Activated CD4-positive, alpha-beta memory T cell treated with anti-CD3 and anti-CD28 coated beads for 36 hours (primary cell): ENCODE measurements at regions of chr1 and their contacts with region 1.

Region 1: GRCh38 chr1:65209005-65209885 is 61.2 kb downstream of the AK4 start:
- DNase-seq: no peak
- H3K4me3 Mint-ChIP-seq: no peak overlapping the region
- H3K27ac Mint-ChIP-seq: no peak overlapping the region
- H3K4me1 Mint-ChIP-seq: peaks cover 14% of the 10 kb centered on the region
- H3K27me3 Mint-ChIP-seq: peaks cover 3% of the 10 kb centered on the region

Region 2: DNA sequence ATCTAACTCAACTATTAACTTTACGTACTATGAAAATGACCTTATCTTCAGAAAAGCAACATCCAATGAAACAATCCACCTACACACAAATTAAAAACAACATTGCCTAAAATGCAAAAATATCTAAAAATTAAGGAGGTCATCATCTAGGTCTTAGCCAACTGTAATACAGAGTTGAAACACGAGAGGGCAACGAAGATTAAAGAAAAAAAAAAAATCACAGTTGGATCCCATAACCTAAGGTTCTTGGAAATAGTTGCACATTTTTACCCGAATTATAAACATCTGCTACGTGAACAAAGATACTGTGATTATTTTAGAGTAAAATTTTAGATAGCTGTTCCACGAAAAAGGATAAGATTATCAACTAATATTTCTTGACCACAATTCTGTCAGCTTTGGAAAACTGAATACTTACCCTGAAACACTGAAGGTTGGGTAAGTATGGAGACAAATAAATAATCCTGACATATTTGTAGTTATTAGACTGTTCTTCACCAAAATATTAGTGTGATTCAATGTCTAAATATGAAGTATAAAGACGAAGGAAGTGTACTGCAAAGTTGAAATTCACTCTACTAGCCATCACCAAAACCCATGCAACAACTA is 149.2 kb before region 1 on chr1:
- CTCF ChIA-PET with region 1: interaction called, 8 read pairs
- POLR2A ChIA-PET with region 1: no interaction called
- intact Hi-C with region 1: loop called (anchors 1 kb)
- DNase-seq: no peak
- H3K4me3 Mint-ChIP-seq: no peak overlapping the region
- H3K27ac Mint-ChIP-seq: no peak overlapping the region
- H3K4me1 Mint-ChIP-seq: peaks cover 45% of the 10 kb centered on the region
- H3K27me3 Mint-ChIP-seq: no peaks in the 10 kb centered on the region

Region 3: GRCh38 chr1:65075123-65075976 is 133.9 kb before region 1 on chr1:
- CTCF ChIA-PET with region 1: interaction called, 18 read pairs
- POLR2A ChIA-PET with region 1: no interaction called
- intact Hi-C with region 1: no loop called
- DNase-seq: peak; percentile 73
- H3K4me3 Mint-ChIP-seq: no peak overlapping the region
- H3K27ac Mint-ChIP-seq: no peak overlapping the region
- H3K4me1 Mint-ChIP-seq: peaks cover 14% of the 10 kb centered on the region
- H3K27me3 Mint-ChIP-seq: no peaks in the 10 kb centered on the region

Region 4: DNA sequence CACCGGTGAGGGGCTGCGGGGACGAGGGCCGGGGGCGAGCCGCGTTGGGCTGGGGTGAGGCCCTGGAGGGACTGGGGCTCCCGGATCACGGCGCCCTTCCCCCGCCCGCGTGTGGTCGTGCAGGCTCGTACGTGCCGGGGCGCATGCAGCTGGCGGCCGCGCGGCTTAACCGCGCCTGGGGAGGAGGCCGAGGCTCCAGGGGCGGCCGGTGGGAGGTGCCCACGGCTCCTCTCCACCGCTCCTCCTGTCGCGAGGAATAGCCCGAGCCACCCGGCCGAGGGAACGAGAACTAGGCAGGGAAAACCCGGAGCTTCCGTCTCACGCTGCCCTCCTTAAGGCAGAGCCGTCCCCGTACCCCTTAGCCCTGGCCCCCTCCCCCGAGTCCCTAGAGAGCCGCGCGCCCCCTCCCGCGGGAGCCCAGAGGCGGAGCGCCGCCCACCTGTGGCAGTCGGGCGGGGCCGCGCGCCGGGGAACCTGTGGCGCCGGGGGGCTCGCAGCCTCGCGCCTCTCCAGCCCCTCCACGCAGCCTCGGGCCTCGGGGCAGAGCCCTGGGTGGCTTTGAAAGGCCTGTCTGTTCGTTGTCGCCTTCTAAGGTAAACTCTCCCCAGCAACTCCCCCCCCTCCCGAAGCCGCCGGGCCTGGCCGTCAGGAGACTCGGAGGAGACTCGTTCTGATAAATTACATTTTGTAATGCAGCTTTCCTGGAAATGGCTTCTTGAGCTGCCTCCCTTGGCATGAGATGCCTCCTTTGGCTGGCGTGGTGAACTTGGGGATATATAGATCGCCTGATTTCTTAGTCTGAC is 60.5 kb before region 1 on chr1:
- CTCF ChIA-PET with region 1: no interaction called
- POLR2A ChIA-PET with region 1: no interaction called
- intact Hi-C with region 1: loop called (anchors 2 kb)
- DNase-seq: peak; percentile 65
- H3K4me3 Mint-ChIP-seq: peak overlapping the region; percentile 76
- H3K27ac Mint-ChIP-seq: no peak overlapping the region
- H3K4me1 Mint-ChIP-seq: peaks cover 14% of the 10 kb centered on the region
- H3K27me3 Mint-ChIP-seq: peaks cover 31% of the 10 kb centered on the region

Region 5: GRCh38 chr1:65221638-65222339 is 12.5 kb after region 1 on chr1:
- CTCF ChIA-PET with region 1: interaction called, 15 read pairs
- POLR2A ChIA-PET with region 1: no interaction called
- intact Hi-C with region 1: no loop called
- DNase-seq: no peak
- H3K4me3 Mint-ChIP-seq: no peak overlapping the region
- H3K27ac Mint-ChIP-seq: no peak overlapping the region
- H3K4me1 Mint-ChIP-seq: no peaks in the 10 kb centered on the region
- H3K27me3 Mint-ChIP-seq: peaks cover 16% of the 10 kb centered on the region

Region 6: GRCh38 chr1:65230731-65231481 is 21.7 kb after region 1 on chr1:
- CTCF ChIA-PET with region 1: interaction called, 6 read pairs
- POLR2A ChIA-PET with region 1: no interaction called
- intact Hi-C with region 1: loop called (anchors 1 kb)
- DNase-seq: peak; percentile 24
- H3K4me3 Mint-ChIP-seq: no peak overlapping the region
- H3K27ac Mint-ChIP-seq: peak overlapping the region; percentile 16
- H3K4me1 Mint-ChIP-seq: peaks cover 17% of the 10 kb centered on the region
- H3K27me3 Mint-ChIP-seq: peaks cover 7% of the 10 kb centered on the region